ENCODE measurements at regions of chr5 and their contacts with region 1.

Region 1: GRCh38 chr5:168260353-168261226 is 30.9 kb upstream of the WWC1 start:
- DNase-seq: no peak
- H3K4me3 ChIP-seq: no peak overlapping the region
- H3K27ac ChIP-seq: no peak overlapping the region
- H3K4me1 ChIP-seq: no peaks in the 10 kb centered on the region
- H3K27me3 ChIP-seq: no peaks in the 10 kb centered on the region
- CTCF ChIP-seq: no peak
- POLR2A ChIP-seq: no peak

Region 2: DNA sequence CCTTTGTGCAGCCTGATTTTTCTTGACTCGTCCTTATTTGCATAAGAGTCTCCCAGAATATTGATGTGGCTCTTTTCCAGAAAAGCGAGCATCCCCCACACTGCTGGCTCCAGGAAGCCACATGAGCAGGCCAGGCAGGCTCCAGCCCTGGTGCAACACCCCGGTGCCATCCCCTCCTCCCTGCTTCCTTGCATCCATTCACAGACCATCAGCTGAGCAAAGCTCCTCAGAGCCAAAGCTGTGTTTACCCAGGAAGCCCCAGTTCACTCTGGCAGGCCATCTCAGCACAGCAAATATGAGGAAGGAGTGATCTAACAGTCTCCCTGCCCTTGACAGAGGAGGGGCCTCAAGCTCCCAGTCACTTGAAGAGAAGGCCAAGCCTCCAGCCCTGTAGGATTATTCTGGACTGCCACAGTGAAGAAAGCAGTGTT is 1685.3 kb after region 1 on chr5:
- intact Hi-C with region 1: loop called (anchors 5 kb)
- DNase-seq: no peak
- H3K4me3 ChIP-seq: no peak overlapping the region
- H3K27ac ChIP-seq: no peak overlapping the region
- H3K4me1 ChIP-seq: no peaks in the 10 kb centered on the region
- H3K27me3 ChIP-seq: no peaks in the 10 kb centered on the region
- CTCF ChIP-seq: no peak
- POLR2A ChIP-seq: no peak